HepG2 (cell line): ENCODE measurements at regions of chr6 and their contacts with region 1.

Region 1: GRCh38 chr6:2196079-2196679 is 49.2 kb downstream of the GMDS start:
- DNase-seq: peak; percentile 40
- ATAC-seq: peak; percentile 71
- H3K4me3 ChIP-seq: no peak overlapping the region
- H3K27ac ChIP-seq: no peak overlapping the region
- H3K4me1 ChIP-seq: peaks cover 9% of the 10 kb centered on the region; the same call in 1 of the 2 replicates
- H3K27me3 ChIP-seq: no peaks in the 10 kb centered on the region
- CTCF ChIP-seq: peak; percentile 72
- EP300 ChIP-seq: no peak
- POLR2A ChIP-seq: no peak
- RAD21 ChIP-seq: 0 out of 2 replicates have a peak, but pooled peaks have one; percentile 24

Region 2: DNA sequence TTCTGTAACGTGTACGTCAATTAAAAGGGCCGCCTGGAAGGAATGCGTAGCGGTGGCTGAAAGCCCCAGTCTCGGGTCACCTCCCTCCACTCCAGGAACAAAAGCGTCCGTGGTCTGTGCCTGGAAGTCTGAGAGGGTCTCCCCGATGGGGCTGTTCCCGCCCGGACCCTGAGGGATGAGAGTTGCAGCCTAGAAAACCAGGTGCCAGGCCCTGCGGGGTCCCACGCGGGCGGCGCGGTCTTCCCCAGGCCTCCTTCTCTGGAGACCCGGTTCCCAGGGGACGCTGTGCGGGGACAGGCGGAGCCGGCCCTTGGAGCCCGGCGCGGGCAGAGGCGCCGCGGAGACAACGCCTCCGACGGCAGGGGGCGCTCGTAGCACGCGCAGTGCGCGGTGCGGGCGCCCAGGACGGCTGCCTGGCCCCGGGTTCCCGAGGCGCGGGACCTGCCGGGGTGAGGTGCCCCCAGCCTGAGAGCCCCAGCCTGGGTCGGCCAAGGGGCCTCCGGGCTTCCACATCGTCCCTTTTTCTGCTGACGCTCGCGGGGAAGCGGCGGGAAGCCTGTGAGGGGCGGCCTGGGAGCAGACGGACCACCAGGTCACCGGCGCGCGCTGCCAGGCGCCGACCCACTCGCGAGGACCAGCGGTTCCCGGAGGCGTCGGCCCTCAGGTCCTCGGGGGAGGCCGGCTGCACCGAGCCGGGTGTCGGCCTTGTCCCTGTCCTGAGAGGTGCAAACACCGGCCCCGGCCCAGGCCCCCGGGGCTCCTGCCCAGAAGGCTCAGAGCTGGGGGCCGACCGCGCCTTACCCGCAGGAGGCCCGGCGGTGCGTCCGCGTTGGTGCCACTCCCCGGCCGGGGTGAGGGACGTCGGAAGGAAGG is 591.8 kb before region 1 on chr6:
- CTCF ChIA-PET with region 1: interaction called, 15 read pairs
- POLR2A ChIA-PET with region 1: no interaction called
- in situ Hi-C with region 1: no loop called
- intact Hi-C with region 1: loop called (anchors 1 kb)
- DNase-seq: peak; percentile 54
- ATAC-seq: peak; percentile 89
- H3K4me3 ChIP-seq: peak overlapping the region; percentile 44 to 77 (median 56)
- H3K27ac ChIP-seq: no peak overlapping the region
- H3K4me1 ChIP-seq: peaks cover 57% of the 10 kb centered on the region
- H3K27me3 ChIP-seq: peaks cover 32 to 97% of the 10 kb centered on the region in 2 experiments
- CTCF ChIP-seq: peak; percentile 92
- EP300 ChIP-seq: no peak
- POLR2A ChIP-seq: no peak
- RAD21 ChIP-seq: peak; percentile 99

Region 3: DNA sequence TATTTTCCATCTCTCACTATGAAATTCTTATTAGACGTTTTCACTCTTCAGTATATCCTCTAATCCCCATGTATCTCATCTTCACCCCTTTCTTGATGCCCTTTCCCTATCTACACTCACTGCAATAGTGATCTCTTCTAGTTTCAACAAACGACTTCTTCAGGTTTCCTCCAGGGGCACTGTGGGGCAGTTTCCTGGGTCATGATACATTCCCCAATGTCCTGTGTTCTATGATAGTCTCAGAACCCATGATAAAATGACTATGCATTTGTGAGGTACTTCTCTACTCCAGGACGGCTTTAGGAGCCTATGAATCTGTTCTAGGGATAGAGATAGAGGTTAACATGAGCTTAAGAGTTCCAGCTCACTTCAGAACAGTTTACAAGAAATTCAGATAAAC is 403.2 kb before region 1 on chr6:
- CTCF ChIA-PET with region 1: no interaction called
- POLR2A ChIA-PET with region 1: no interaction called
- in situ Hi-C with region 1: no loop called
- intact Hi-C with region 1: loop called (anchors 5 kb)
- DNase-seq: peak; percentile 53
- ATAC-seq: peak; percentile 96
- H3K4me3 ChIP-seq: no peak overlapping the region
- H3K27ac ChIP-seq: no peak overlapping the region
- H3K4me1 ChIP-seq: 0 out of 2 replicates have a peak, but pooled peaks cover 6% of the 10 kb centered on the region
- H3K27me3 ChIP-seq: no peaks in the 10 kb centered on the region
- CTCF ChIP-seq: peak; percentile 49
- EP300 ChIP-seq: no peak
- POLR2A ChIP-seq: no peak
- RAD21 ChIP-seq: no peak

Region 4: DNA sequence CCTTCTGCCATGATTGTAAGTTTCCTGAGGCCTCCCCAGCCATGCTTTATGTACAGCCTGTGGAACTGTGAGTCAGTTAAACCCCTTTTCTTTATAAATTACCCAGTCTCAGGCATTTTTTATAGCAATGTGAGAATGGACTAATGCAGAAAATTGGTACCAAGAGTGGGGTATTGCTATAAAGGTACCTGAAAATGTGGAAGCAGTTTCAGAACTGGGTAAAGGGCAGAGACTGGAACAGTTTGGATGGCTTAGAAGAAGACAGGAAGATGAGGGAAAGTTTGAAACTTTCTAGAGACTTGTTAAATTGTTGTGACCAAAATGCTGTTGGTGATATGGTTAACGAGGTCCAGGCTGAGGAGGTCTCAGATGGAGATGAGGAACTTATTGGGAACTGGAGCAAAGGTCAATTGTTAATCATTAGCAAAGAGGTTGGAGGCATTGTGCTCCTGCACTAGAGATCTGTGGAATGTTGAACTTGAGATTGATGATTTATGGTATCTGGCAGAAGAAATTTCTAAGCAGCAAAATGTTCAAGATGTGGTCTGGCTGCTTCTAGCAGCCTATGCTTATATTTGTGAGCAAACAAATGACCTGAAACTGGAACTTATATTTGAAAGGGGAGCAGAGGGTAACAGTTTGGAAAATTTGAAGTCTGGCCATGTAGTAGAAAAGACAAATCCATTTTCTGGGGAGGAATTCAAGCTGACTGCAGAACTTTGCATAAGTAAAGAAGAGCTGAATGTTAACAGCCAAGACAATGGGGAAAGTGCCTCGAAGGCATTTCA is 128.2 kb after region 1 on chr6:
- CTCF ChIA-PET with region 1: no interaction called
- POLR2A ChIA-PET with region 1: no interaction called
- in situ Hi-C with region 1: no loop called
- intact Hi-C with region 1: no loop called
- DNase-seq: no peak
- ATAC-seq: no peak
- H3K4me3 ChIP-seq: no peak overlapping the region
- H3K27ac ChIP-seq: no peak overlapping the region
- H3K4me1 ChIP-seq: peaks cover 6% of the 10 kb centered on the region; the same call in 1 of the 2 replicates
- H3K27me3 ChIP-seq: no peaks in the 10 kb centered on the region
- CTCF ChIP-seq: no peak
- EP300 ChIP-seq: no peak
- POLR2A ChIP-seq: no peak
- RAD21 ChIP-seq: no peak

Region 5: GRCh38 chr6:2363211-2363610 is 167.0 kb after region 1 on chr6:
- CTCF ChIA-PET with region 1: no interaction called
- POLR2A ChIA-PET with region 1: no interaction called
- in situ Hi-C with region 1: no loop called
- intact Hi-C with region 1: no loop called
- DNase-seq: no peak
- ATAC-seq: no peak
- H3K4me3 ChIP-seq: no peak overlapping the region
- H3K27ac ChIP-seq: no peak overlapping the region
- H3K4me1 ChIP-seq: no peaks in the 10 kb centered on the region
- H3K27me3 ChIP-seq: no peaks in the 10 kb centered on the region
- CTCF ChIP-seq: no peak
- EP300 ChIP-seq: no peak
- POLR2A ChIP-seq: no peak
- RAD21 ChIP-seq: no peak